PC-3 (cell line): ENCODE measurements at regions of chr6 and their contacts with region 1.

Region 1: GRCh38 chr6:6783721-6784120 is 195.2 kb downstream of the LY86 start:
- DNase-seq: no peak
- ATAC-seq: no peak
- H3K4me3 ChIP-seq: no peak overlapping the region
- H3K27ac ChIP-seq: no peak overlapping the region
- H3K4me1 ChIP-seq: peaks cover 20% of the 10 kb centered on the region
- H3K27me3 ChIP-seq: no peaks in the 10 kb centered on the region
- CTCF ChIP-seq: no peak

Region 2: GRCh38 chr6:5778317-5778857 is 1005.3 kb before region 1 on chr6:
- CTCF ChIA-PET with region 1: interaction called, 12 read pairs
- POLR2A ChIA-PET with region 1: no interaction called
- intact Hi-C with region 1: no loop called
- DNase-seq: no peak
- ATAC-seq: no peak
- H3K4me3 ChIP-seq: no peak overlapping the region
- H3K27ac ChIP-seq: no peak overlapping the region
- H3K4me1 ChIP-seq: no peaks in the 10 kb centered on the region
- H3K27me3 ChIP-seq: no peaks in the 10 kb centered on the region
- CTCF ChIP-seq: no peak

Region 3: GRCh38 chr6:6521961-6522482 is 261.7 kb before region 1 on chr6:
- CTCF ChIA-PET with region 1: no interaction called
- POLR2A ChIA-PET with region 1: no interaction called
- intact Hi-C with region 1: no loop called
- DNase-seq: no peak
- ATAC-seq: no peak
- H3K4me3 ChIP-seq: no peak overlapping the region
- H3K27ac ChIP-seq: no peak overlapping the region
- H3K4me1 ChIP-seq: no peaks in the 10 kb centered on the region
- H3K27me3 ChIP-seq: peaks cover 77% of the 10 kb centered on the region
- CTCF ChIP-seq: no peak